Adrenal gland (tissue), 19 donors: ENCODE measurements at regions of chr17 and their contacts with region 1.

Region 1: GRCh38 chr17:45834471-45835396 is 9.9 kb upstream of the SPPL2C start:
- DNase-seq: no peak
- H3K4me3 ChIP-seq: no peak overlapping the region
- H3K27ac ChIP-seq: no peak overlapping the region
- H3K4me1 ChIP-seq: no peaks in the 10 kb centered on the region
- H3K27me3 ChIP-seq: no peaks in the 10 kb centered on the region
- CTCF ChIP-seq: no peak
- POLR2A ChIP-seq: no peak

Region 2: GRCh38 chr17:45228763-45229539 is 605.8 kb before region 1 on chr17:
- intact Hi-C with region 1: loop called in 1 of 2 experiments (anchors 10 kb)
- DNase-seq: peak; percentile 67 to 83 (median 75)
- H3K4me3 ChIP-seq: no peak overlapping the region
- H3K27ac ChIP-seq: peak overlapping the region in 3 of 5 donors; percentile 41 to 85 (median 61)
- H3K4me1 ChIP-seq: peaks cover 8 to 29% of the 10 kb centered on the region in 2 donors
- H3K27me3 ChIP-seq: no peaks in the 10 kb centered on the region
- CTCF ChIP-seq: no peak
- POLR2A ChIP-seq: no peak

Region 3: DNA sequence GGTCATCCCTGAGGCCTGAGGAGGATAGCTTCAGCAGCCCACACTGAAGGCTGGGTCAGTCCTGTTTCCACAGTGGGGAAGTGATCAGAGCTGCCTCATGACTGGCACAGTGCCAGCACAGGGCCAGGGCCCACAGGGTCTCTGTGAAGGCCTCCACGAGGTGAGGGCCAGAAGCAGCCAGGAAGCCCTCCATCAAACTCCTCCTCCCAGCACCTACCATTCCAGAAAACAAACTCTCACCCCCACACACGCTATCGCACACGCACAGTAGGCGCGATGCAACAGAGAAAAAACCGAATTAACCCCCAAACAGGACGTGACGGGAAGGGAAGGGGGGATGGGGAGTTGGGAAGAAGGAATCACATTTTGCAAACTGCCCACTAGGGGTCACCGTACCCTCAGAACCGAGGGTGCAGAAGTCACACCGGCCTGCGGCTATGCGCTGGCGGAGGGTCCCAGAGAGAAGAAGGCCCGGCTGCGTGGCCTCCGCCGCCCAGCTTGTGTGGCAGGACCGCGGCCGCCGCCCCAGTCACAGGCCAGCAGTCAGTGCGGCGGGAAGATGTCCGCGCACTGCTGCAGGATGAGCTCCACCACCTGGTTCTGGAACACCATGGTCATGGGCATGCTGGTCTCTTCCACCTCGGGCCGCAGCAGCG is 439.7 kb before region 1 on chr17:
- intact Hi-C with region 1: loop called in 1 of 2 experiments (anchors 10 kb)
- DNase-seq: peak; percentile 65 to 85 (median 74)
- H3K4me3 ChIP-seq: no peak overlapping the region
- H3K27ac ChIP-seq: no peak overlapping the region
- H3K4me1 ChIP-seq: peaks cover 0 to 10% of the 10 kb centered on the region in 2 donors
- H3K27me3 ChIP-seq: no peaks in the 10 kb centered on the region
- CTCF ChIP-seq: peak; percentile 61 to 80 (median 73)
- POLR2A ChIP-seq: no peak

Region 4: DNA sequence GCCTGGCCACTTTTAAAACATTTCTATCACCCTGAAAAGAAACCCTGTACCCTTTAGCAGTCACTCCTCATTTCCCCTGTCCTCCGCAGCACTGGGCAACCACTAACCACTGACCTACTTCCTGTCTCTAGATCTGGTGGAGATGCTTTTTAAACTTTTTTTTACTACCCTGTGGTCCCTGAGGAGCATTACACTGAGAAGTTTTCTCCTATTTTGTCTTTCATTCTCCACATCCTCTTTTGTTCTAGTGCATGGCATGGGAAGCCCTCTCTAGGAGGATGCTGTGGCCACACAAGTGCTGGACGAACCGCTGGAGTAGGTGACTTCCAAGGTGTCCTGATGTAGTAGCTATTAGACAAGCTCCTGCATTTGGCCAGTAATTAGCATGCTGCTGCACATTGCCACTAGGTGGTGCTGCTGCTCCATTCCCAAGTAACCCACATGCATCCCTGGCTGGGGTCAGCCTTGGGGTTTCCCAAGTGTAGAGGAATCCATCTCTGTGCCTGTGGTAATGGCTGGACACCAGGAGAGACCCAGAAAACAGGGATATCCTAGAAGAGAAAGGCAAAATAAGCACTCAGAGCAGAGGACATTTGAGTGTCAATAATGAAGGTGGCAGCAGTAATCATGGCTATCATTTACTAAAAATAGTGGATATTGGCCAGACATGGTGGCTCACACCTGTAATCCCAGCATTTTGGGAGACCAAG is 194.4 kb before region 1 on chr17:
- intact Hi-C with region 1: loop called (anchors 2 to 5 kb)
- DNase-seq: peak; percentile 70 to 88 (median 73)
- H3K4me3 ChIP-seq: no peak overlapping the region
- H3K27ac ChIP-seq: no peak overlapping the region
- H3K4me1 ChIP-seq: no peaks in the 10 kb centered on the region
- H3K27me3 ChIP-seq: no peaks in the 10 kb centered on the region
- CTCF ChIP-seq: peak; percentile 90 to 98 (median 95)
- POLR2A ChIP-seq: no peak